HCT116 (cell line): ENCODE measurements at regions of chr19 and their contacts with region 1.

Region 1: DNA sequence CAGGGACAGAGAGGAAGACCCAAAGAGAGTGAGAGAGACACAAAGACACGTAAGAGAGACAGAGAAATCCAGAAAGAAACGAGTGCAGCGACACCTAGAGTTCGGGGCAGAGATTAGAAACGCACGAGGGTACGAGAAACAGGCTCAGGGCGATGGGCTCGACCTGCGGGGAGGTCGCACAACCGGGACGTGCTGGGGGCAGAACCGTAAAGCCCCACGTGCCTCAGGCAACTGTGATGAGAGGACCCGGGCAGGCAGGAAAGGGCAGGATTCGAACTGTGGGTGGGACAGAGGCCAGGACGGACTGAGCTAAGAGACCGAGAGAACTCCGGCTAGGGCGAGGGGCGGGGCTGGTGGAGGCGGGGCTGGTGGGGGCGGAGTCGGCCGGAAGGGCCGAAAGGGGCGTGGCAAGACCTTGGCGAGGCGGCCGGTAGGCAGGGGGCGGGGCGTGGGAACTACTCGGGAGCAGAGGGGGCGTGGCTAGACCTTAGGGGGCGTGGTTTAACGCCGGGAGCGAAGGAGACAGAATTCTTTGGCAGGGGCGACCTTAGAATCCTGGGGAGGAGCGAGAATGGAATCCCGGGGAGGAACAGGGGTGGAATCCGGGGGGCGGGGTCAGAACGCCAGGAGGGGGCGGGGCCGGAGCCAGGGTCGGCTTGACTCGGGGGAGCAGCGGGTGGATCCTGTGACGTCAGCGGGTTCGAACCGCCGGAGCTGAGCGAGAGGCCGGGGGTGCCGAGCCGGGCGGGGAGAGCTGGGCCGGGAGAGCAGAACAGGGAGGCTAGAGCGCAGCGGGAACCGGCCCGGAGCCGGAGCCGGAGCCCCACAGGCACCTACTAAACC is at the start of gene NECTIN2:
- DNase-seq: peak; percentile 98
- ATAC-seq: peak; percentile 66
- H3K4me3 ChIP-seq: peak within 1 kb of the TSS; percentile 98 to 99
- H3K27ac ChIP-seq: peak within 1 kb of the TSS; percentile 92
- H3K4me1 ChIP-seq: peaks cover 22 to 66% of the 10 kb centered on the region in 2 experiments
- H3K27me3 ChIP-seq: no peaks in the 10 kb centered on the region
- CTCF ChIP-seq: peak; percentile 69 to 87 (median 72); a peak in 5 of 6 replicates
- POLR2A ChIP-seq: no peak
- RAD21 ChIP-seq: no peak; the same call in none of the 2 replicates
- total RNA-seq, gene NECTIN2: 96.3 TPM

Region 2: DNA sequence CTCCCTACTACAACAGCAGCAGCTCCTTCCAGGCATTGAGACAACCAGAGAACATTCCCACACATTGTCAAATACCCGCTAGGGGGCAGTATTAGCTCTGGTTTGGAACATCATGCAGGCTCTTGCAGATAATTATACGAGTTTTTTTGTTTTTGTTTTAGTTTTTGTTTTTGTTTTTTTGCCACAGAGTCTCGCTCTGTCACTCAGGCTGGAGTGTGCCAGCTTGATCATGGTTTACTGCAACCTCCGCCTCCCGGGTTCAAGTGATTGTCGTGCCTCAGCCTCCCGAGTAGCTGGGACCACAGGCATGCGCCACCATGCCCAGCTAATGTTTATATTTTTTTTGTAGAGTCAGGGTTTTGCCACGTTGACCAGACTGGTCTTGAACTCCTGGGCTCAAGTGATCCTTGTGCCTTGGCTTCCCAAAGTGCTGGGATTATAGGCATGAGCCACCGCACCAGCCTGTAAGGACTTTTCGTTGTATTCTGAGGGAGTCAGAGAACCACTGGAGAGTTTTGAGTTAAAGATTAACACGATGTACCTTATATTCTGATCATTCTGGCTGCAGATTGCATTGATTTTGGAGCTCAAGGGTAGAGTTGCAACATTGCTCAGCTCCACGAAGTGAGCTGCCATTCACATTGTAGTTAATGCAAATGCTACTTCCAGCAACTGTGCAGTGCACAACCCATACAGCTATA is 274.7 kb before region 1 on chr19:
- CTCF ChIA-PET with region 1: interaction called, 3 read pairs
- POLR2A ChIA-PET with region 1: no interaction called
- RAD21 ChIA-PET with region 1: interaction called in 1 of 2 experiments, 7 read pairs
- intact Hi-C with region 1: loop called (anchors 5 kb)
- DNase-seq: peak; percentile 76
- ATAC-seq: peak; percentile 96
- H3K4me3 ChIP-seq: no peak overlapping the region
- H3K27ac ChIP-seq: no peak overlapping the region
- H3K4me1 ChIP-seq: no peaks in the 10 kb centered on the region; a peak in 1 of 4 replicates
- H3K27me3 ChIP-seq: no peaks in the 10 kb centered on the region
- CTCF ChIP-seq: peak; percentile 77 to 82 (median 79)
- POLR2A ChIP-seq: no peak
- RAD21 ChIP-seq: peak; percentile 88

Region 3: DNA sequence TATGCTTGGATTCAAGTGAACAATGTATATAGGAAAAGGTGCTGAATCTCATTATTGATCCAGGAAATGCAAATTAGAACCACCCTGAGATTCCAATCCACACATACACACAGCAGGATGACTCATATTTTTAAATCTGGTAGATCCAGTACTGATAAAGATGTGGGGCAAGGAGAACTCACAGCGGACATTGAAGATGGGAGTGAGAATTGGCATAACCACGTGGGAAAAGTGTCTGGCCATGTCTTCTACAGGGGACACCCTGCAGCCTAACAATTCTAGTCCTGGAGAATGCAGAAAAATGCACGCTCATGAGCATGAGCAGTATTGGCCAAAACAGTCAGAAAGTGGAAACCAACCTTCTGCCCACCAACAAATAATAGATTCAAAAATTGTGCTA is 110.8 kb before region 1 on chr19:
- CTCF ChIA-PET with region 1: no interaction called
- POLR2A ChIA-PET with region 1: no interaction called
- RAD21 ChIA-PET with region 1: interaction called in 1 of 2 experiments, 10 read pairs
- intact Hi-C with region 1: no loop called
- DNase-seq: no peak
- ATAC-seq: peak; percentile 65
- H3K4me3 ChIP-seq: no peak overlapping the region
- H3K27ac ChIP-seq: no peak overlapping the region
- H3K4me1 ChIP-seq: peaks cover 43 to 54% of the 10 kb centered on the region in 2 experiments
- H3K27me3 ChIP-seq: no peaks in the 10 kb centered on the region
- CTCF ChIP-seq: no peak
- POLR2A ChIP-seq: no peak
- RAD21 ChIP-seq: no peak

Region 4: GRCh38 chr19:44777715-44778347 is 68.0 kb before region 1 on chr19 and contains the start of gene CBLC:
- CTCF ChIA-PET with region 1: interaction called, 5 read pairs
- POLR2A ChIA-PET with region 1: interaction called, 5 read pairs
- RAD21 ChIA-PET with region 1: interaction called in 1 of 2 experiments, 3 read pairs
- intact Hi-C with region 1: loop called (anchors 2 kb)
- DNase-seq: peak; percentile 94
- ATAC-seq: peak; percentile 90
- H3K4me3 ChIP-seq: peak within 1 kb of the TSS; percentile 75 to 96
- H3K27ac ChIP-seq: peak within 1 kb of the TSS; percentile 90
- H3K4me1 ChIP-seq: peaks cover 51 to 69% of the 10 kb centered on the region in 2 experiments
- H3K27me3 ChIP-seq: no peaks in the 10 kb centered on the region
- CTCF ChIP-seq: peak in 2 of 3 experiments; percentile 17 to 20; a peak in 2 of 6 replicates
- POLR2A ChIP-seq: peak; percentile 49
- RAD21 ChIP-seq: no peak
- total RNA-seq, gene CBLC: 54.3 TPM

Region 5: GRCh38 chr19:44808463-44809371 is 37.1 kb before region 1 on chr19 and contains the start of gene BCAM:
- CTCF ChIA-PET with region 1: interaction called, 7 read pairs
- POLR2A ChIA-PET with region 1: interaction called, 5 read pairs
- RAD21 ChIA-PET with region 1: interaction called in 1 of 2 experiments, 3 read pairs
- intact Hi-C with region 1: loop called (anchors 2 kb)
- DNase-seq: no peak
- ATAC-seq: peak; percentile 60
- H3K4me3 ChIP-seq: peak within 1 kb of the TSS; percentile 75 to 85
- H3K27ac ChIP-seq: peak within 1 kb of the TSS; percentile 89
- H3K4me1 ChIP-seq: peaks cover 34 to 45% of the 10 kb centered on the region in 2 experiments
- H3K27me3 ChIP-seq: no peaks in the 10 kb centered on the region
- CTCF ChIP-seq: no peak
- POLR2A ChIP-seq: peak; percentile 44
- RAD21 ChIP-seq: no peak
- total RNA-seq, gene BCAM: 78.7 TPM

Region 6: DNA sequence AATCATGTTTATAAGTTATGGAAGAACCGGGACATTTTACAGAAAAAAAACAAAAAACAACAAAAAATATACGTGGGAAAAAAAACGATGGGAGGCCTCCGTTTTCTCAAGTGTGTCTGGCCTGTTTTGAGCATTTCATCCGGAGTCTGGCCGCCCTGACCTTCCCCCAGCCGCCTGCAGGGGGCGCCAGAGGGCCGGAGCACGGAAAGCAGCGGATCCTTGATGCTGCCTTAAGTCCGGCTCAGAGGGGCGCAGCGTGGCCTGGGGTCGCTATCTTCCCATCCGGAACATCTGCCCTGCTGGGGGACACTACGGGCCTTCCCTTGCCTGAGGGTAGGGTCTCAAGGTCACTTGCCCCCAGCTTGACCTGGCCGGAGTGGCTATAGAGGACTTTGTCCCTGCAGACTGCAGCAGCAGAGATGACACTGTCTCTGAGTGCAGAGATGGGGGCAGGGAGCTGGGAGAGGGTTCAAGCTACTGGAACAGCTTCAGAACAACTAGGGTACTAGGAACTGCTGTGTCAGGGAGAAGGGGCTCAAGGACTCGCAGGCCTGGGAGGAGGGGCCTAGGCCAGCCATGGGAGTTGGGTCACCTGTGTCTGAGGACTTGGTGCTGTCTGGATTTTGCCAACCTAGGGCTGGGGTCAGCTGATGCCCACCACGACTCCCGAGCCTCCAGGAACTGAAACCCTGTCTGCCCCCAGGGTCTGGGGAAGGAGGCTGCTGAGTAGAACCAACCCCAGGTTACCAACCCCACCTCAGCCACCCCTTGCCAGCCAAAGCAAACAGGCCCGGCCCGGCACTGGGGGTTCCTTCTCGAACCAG is 58.0 kb after region 1 on chr19:
- CTCF ChIA-PET with region 1: no interaction called
- POLR2A ChIA-PET with region 1: no interaction called
- RAD21 ChIA-PET with region 1: no interaction called
- intact Hi-C with region 1: no loop called
- DNase-seq: no peak
- ATAC-seq: peak; percentile 61
- H3K4me3 ChIP-seq: no peak overlapping the region
- H3K27ac ChIP-seq: peak overlapping the region; percentile 37
- H3K4me1 ChIP-seq: peaks cover 4 to 32% of the 10 kb centered on the region in 2 experiments; a peak in 3 of 4 replicates
- H3K27me3 ChIP-seq: no peaks in the 10 kb centered on the region
- CTCF ChIP-seq: peak; percentile 80 to 98 (median 97)
- POLR2A ChIP-seq: no peak
- RAD21 ChIP-seq: peak; percentile 89